ENCODE measurements at regions of chr2 and their contacts with region 1.

Region 1: GRCh38 chr2:191617575-191617974 is 60.4 kb upstream of the NABP1 start:
- DNase-seq: peak; percentile 76
- ATAC-seq: peak; percentile 88
- H3K4me3 ChIP-seq: no peak overlapping the region
- H3K27ac ChIP-seq: peak overlapping the region; percentile 26; the same call in 1 of the 2 replicates
- H3K4me1 ChIP-seq: peaks cover 13% of the 10 kb centered on the region
- H3K27me3 ChIP-seq: no peaks in the 10 kb centered on the region
- CTCF ChIP-seq: no peak
- EP300 ChIP-seq: peak; percentile 73 to 77; a peak in 3 of 4 replicates
- POLR2A ChIP-seq: no peak
- RAD21 ChIP-seq: peak; percentile 13; the same call in 1 of the 2 replicates

Region 2: GRCh38 chr2:191650896-191651773 is 33.6 kb after region 1 on chr2:
- CTCF ChIA-PET with region 1: interaction called, 3 read pairs
- POLR2A ChIA-PET with region 1: no interaction called
- RAD21 ChIA-PET with region 1: interaction called, 5 read pairs
- SMC1A ChIA-PET with region 1: interaction called, 12 read pairs
- in situ Hi-C with region 1: no loop called
- intact Hi-C with region 1: loop called (anchors 1 kb)
- DNase-seq: peak; percentile 73
- ATAC-seq: peak; percentile 98
- H3K4me3 ChIP-seq: no peak overlapping the region
- H3K27ac ChIP-seq: peak overlapping the region; percentile 38; the same call in 1 of the 2 replicates
- H3K4me1 ChIP-seq: 0 out of 2 replicates have a peak, but pooled peaks cover 6% of the 10 kb centered on the region
- H3K27me3 ChIP-seq: no peaks in the 10 kb centered on the region
- CTCF ChIP-seq: no peak
- EP300 ChIP-seq: peak; percentile 66 to 90; a peak in 2 of 4 replicates
- POLR2A ChIP-seq: no peak
- RAD21 ChIP-seq: peak; percentile 25; the same call in 1 of the 2 replicates

Region 3: GRCh38 chr2:191656391-191656790 is 38.8 kb after region 1 on chr2:
- CTCF ChIA-PET with region 1: interaction called, 4 read pairs
- POLR2A ChIA-PET with region 1: interaction called, 5 read pairs
- RAD21 ChIA-PET with region 1: interaction called, 5 read pairs
- SMC1A ChIA-PET with region 1: interaction called, 31 read pairs
- in situ Hi-C with region 1: no loop called
- intact Hi-C with region 1: loop called (anchors 1 kb)
- DNase-seq: no peak
- ATAC-seq: no peak
- H3K4me3 ChIP-seq: no peak overlapping the region
- H3K27ac ChIP-seq: no peak overlapping the region
- H3K4me1 ChIP-seq: no peaks in the 10 kb centered on the region
- H3K27me3 ChIP-seq: no peaks in the 10 kb centered on the region
- CTCF ChIP-seq: no peak
- EP300 ChIP-seq: no peak
- POLR2A ChIP-seq: no peak
- RAD21 ChIP-seq: no peak

Region 4: GRCh38 chr2:191783416-191783815 is 165.8 kb after region 1 on chr2:
- CTCF ChIA-PET with region 1: no interaction called
- POLR2A ChIA-PET with region 1: no interaction called
- RAD21 ChIA-PET with region 1: no interaction called
- SMC1A ChIA-PET with region 1: no interaction called
- in situ Hi-C with region 1: no loop called
- intact Hi-C with region 1: no loop called
- DNase-seq: no peak
- ATAC-seq: peak; percentile 92
- H3K4me3 ChIP-seq: no peak overlapping the region
- H3K27ac ChIP-seq: no peak overlapping the region
- H3K4me1 ChIP-seq: no peaks in the 10 kb centered on the region
- H3K27me3 ChIP-seq: 0 out of 4 replicates have a peak, but pooled peaks cover 0 to 2% of the 10 kb centered on the region in 2 experiments
- CTCF ChIP-seq: no peak
- EP300 ChIP-seq: no peak
- POLR2A ChIP-seq: no peak
- RAD21 ChIP-seq: no peak